Activated CD4-positive, alpha-beta T cell treated with anti-CD3 and anti-CD28 coated beads for 36 hours (primary cell): ENCODE measurements at regions of chr1 and their contacts with region 1.

Region 1: DNA sequence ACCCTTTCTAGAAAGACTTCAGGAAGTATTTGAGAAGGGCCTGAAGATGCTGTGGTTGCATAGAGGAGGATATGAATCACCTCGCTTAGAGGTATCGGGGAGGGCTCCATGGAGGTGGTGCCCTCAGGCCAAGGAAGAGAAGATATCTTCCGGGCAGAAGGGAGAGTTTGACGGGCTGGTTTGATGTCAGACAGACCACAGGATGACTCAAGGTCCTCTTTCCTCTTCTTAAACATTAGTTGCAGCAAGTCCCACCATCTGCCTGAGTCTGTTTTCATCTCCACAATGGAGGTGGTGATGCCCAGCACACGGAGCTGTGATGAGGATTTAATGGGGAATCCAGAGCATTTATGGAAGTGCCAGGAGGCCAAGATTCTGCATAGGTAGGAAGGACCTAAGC is 25.1 kb upstream of the RUNX3 start:
- DNase-seq: peak; percentile 89
- ATAC-seq: peak; percentile 85
- H3K4me3 Mint-ChIP-seq: peak overlapping the region; percentile 94
- H3K27ac Mint-ChIP-seq: peak overlapping the region; percentile 99
- H3K4me1 Mint-ChIP-seq: peaks cover 93% of the 10 kb centered on the region
- H3K27me3 Mint-ChIP-seq: no peaks in the 10 kb centered on the region

Region 2: DNA sequence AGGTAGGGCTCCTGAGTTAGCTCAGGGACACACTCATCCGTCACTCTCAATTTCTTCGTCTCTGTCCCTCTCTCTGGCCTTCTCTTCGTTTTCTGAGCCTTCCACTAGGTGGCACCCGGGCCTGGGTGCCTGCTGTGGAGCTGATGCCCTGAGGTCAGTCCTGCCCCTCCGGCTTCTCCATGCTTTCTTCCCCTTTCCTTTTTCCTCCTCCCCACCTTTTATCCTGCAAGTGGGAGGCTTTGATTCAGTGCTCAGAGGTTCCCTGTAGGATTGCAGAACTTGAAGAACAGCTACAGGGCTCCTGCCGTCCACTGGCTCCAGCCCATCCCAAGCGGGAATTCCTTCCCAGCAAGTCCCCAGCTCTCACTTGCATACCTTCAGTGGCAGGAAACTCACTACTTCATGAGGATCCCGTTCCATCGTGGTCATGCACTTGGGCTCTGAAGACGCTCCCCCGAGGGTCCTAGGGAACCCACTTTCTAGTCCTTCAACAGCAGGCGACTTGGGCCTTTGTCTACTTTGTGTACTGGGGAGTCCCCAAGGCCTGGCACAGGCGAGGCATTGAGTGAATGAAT is 266.5 kb before region 1 on chr1:
- CTCF ChIA-PET with region 1: no interaction called
- POLR2A ChIA-PET with region 1: no interaction called
- intact Hi-C with region 1: no loop called
- DNase-seq: peak; percentile 78
- ATAC-seq: peak; percentile 92
- H3K4me3 Mint-ChIP-seq: no peak overlapping the region
- H3K27ac Mint-ChIP-seq: no peak overlapping the region
- H3K4me1 Mint-ChIP-seq: no peaks in the 10 kb centered on the region
- H3K27me3 Mint-ChIP-seq: no peaks in the 10 kb centered on the region

Region 3: DNA sequence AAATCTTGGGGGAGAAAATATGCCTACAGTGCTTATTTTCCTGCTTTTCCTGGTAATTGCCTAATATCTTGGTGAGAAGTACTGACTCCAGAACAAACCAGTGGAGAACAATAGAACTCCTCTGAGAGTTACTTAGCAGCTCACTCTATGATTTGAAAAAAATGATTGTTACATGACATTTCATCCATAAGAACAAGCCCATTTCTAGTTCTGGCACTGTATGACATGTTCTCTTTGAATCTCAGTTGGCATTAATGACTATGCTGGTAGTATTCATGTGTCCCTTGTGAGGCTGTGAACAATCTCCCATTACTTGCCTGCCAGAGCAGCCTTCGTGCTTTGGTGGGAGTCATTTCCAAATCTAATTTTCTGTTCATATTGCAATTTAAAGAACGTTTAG is 151.9 kb before region 1 on chr1:
- CTCF ChIA-PET with region 1: no interaction called
- POLR2A ChIA-PET with region 1: no interaction called
- intact Hi-C with region 1: no loop called
- DNase-seq: no peak
- ATAC-seq: no peak
- H3K4me3 Mint-ChIP-seq: no peak overlapping the region
- H3K27ac Mint-ChIP-seq: no peak overlapping the region
- H3K4me1 Mint-ChIP-seq: peaks cover 3% of the 10 kb centered on the region
- H3K27me3 Mint-ChIP-seq: no peaks in the 10 kb centered on the region

Region 4: GRCh38 chr1:24925082-24925779 is 29.9 kb before region 1 on chr1:
- CTCF ChIA-PET with region 1: interaction called, 17 read pairs
- POLR2A ChIA-PET with region 1: interaction called, 8 read pairs
- intact Hi-C with region 1: loop called in 1 of 2 experiments (anchors 1 kb)
- DNase-seq: peak; percentile 92
- ATAC-seq: peak; percentile 45
- H3K4me3 Mint-ChIP-seq: peak overlapping the region; percentile 80
- H3K27ac Mint-ChIP-seq: peak overlapping the region; percentile 91
- H3K4me1 Mint-ChIP-seq: peaks cover 70% of the 10 kb centered on the region
- H3K27me3 Mint-ChIP-seq: no peaks in the 10 kb centered on the region

Region 5: DNA sequence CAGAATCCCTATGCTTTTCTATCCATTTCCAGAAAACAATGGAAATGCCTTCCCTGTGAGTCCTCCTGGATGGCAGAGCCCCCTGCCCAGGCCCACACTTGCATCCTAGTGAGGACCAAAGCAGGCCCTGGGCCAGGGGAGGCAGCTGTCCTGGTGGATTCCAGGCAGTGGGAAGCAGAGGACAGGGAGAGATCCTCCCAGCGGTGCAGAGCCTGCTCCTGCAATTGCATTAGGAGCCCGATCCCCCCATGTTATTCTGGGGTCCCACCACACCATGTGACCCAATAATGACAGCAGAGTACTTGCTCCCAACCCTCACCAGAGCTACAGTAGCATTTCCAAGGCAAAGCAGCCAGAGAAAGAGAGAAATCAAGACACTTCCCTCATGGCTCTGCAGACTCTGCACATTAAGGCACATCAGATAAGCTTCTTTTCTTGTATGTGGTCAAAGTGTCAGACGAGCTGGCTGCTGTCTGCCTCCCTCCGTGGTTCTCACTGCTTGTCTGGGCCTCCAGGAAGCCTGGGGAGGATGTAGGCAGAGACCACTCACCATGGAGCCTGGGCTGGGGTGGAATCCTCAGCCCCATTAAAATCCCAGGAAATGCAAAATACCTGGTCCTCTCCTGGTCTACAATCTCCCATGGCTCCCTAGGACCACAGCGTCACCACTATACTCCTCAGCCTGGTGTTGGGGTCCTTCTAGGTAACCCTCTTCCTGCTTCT is 29.8 kb after region 1 on chr1:
- CTCF ChIA-PET with region 1: interaction called, 4 read pairs
- POLR2A ChIA-PET with region 1: no interaction called
- intact Hi-C with region 1: loop called in 1 of 2 experiments (anchors 1 kb)
- DNase-seq: no peak
- ATAC-seq: no peak
- H3K4me3 Mint-ChIP-seq: no peak overlapping the region
- H3K27ac Mint-ChIP-seq: peak overlapping the region; percentile 8
- H3K4me1 Mint-ChIP-seq: peaks cover 89% of the 10 kb centered on the region
- H3K27me3 Mint-ChIP-seq: no peaks in the 10 kb centered on the region

Region 6: DNA sequence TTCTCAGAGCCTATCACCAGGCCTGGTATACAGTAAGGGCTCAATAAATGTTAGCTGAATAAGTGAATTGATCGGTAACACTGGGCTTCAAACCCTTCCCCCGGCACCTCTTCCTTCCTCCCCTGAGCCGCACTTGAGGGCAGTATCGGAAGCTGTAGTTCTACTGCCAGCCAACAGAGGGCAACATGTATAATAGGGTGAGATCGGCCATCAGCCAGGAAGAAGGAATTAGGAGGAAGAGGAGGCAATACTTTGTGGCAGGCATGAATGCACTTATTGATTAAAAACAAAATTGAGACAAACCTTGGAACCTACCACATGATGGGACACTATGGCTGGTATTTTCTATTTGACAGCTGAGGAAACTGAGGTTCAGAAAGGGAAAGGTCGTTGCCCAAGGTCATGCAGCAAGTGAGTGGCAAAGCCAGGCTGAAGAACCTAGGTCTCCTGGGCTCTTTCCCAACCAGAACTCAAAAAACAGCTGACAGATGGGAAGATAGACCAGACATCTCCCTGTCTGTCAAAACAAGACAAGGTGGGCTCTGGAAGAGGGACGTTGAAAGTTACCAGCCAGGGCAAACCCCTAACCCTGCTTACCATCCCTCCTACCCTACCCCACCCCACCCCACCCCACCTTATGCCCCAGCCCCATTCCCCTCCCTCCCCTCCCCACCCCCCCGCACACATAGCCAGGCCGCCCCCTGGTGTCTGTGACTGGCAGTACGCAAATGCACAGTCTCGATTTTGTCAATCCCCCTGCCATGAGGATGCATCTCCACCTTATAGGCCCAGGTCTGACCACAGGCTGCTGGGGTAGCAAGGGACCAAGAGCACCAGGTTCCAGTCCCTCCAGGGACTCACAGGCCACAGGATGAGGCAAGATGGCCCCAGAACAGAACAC is 82.3 kb after region 1 on chr1:
- CTCF ChIA-PET with region 1: interaction called, 96 read pairs
- POLR2A ChIA-PET with region 1: no interaction called
- intact Hi-C with region 1: loop called (anchors 1 to 2 kb)
- DNase-seq: peak; percentile 86
- ATAC-seq: peak; percentile 55
- H3K4me3 Mint-ChIP-seq: no peak overlapping the region
- H3K27ac Mint-ChIP-seq: peak overlapping the region; percentile 27
- H3K4me1 Mint-ChIP-seq: peaks cover 35% of the 10 kb centered on the region
- H3K27me3 Mint-ChIP-seq: no peaks in the 10 kb centered on the region

Region 7: DNA sequence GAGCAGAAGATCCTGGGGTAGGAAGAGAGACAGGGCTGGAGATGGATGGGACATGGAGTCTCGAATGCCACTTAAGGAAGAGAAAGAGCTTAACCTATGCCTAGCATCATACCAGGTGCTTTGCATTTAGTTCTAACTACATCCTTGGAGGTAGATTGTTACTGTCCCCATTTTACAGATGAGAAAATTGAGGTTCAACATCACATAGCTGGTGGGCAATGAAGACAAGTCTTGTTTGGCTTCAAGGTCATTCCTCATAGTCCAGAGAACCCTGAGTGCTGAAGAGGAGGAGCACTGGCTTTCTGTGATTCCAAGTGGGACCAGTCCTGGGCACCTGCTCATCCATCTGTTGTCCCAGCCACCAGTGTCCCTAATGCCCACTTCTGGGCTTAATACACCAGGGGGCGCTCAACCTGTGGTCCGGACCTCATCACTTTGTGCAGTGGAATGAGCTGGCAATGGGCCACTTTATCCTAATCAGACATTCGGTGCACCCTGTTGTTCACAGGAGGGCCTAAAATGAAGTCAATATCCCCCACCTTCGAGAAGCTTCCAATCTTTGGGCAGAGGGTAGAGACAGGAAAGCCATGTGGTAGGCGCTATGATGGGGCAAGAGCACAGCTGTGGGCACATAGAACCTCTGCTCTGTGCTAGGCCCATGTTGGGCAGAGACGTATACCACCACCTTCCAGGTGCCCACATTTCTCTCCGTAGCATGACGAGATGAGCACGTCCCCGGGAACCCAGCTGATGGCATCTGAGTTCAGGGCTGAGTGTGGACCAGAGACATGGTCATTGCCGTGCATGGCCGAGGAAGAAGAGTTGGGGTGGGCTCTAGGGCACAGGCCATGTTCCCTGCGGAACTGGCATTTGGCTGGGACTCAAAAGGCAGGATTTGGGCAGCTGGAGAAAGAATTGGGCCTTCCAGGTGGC is 1583.6 kb after region 1 on chr1:
- CTCF ChIA-PET with region 1: no interaction called
- POLR2A ChIA-PET with region 1: no interaction called
- intact Hi-C with region 1: no loop called
- DNase-seq: peak; percentile 75
- ATAC-seq: no peak
- H3K4me3 Mint-ChIP-seq: no peak overlapping the region
- H3K27ac Mint-ChIP-seq: peak overlapping the region; percentile 38
- H3K4me1 Mint-ChIP-seq: peaks cover 76% of the 10 kb centered on the region
- H3K27me3 Mint-ChIP-seq: no peaks in the 10 kb centered on the region